ENCODE measurements at regions of chr2 and their contacts with region 1.

Region 1: GRCh38 chr2:96547751-96548161 is 11.2 kb downstream of the ARID5A start:
- DNase-seq: peak in 1 of 35 experiments; percentile 4
- ATAC-seq: no peak
- H3K4me3 ChIP-seq: no peak overlapping the region
- H3K4me3 Mint-ChIP-seq: peak overlapping the region in 2 of 3 donors; percentile 13 to 64
- H3K27ac ChIP-seq: no peak overlapping the region
- H3K27ac Mint-ChIP-seq: peak overlapping the region; percentile 66 to 87
- H3K4me1 ChIP-seq: peaks cover 20 to 50% of the 10 kb centered on the region in 2 experiments
- H3K4me1 Mint-ChIP-seq: peaks cover 50 to 55% (median 51%) of the 10 kb centered on the region in 3 donors
- H3K27me3 ChIP-seq: no peaks in the 10 kb centered on the region
- H3K27me3 Mint-ChIP-seq: no peaks in the 10 kb centered on the region

Region 2: DNA sequence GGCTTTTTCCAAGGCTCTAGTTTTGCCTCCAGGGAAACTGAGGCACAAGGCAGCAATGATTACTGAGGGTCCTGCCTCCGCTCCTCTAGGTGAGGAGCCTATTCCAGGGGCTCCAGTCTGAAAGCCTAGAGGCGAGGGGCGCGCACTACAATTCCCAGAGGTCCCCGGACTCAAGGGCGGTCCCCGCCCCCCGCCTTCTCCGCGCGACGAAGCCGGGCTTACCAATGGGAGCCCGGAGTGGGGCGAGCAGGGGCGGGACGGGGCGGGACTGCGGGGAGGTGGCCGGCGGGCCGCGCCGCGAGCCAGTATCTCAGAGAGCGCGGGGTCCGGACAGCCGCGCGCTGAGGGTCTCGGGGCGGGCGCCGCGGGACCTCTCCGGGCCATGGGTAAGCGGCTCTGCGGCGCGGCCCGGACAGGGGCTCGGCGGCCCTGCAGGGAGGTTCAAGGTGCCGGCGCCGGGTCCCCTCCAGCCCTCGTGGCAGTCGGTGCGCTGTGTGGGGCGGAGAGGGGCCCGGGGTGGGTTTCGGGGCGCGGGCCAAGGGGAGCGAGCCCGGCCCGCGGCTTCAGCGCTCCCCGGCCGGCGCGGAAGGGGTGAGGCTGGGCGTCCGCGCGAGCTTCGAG is 11.2 kb before region 1 on chr2 and contains the start of gene ARID5A:
- CTCF ChIA-PET with region 1: interaction called in 1 of 2 experiments, 48 read pairs
- POLR2A ChIA-PET with region 1: interaction called, 11 to 15 read pairs
- DNase-seq: peak; percentile 82 to 95 (median 92)
- ATAC-seq: peak; percentile 61 to 82 (median 72)
- H3K4me3 ChIP-seq: peak within 1 kb of the TSS; percentile 82 to 96
- H3K4me3 Mint-ChIP-seq: peak within 1 kb of the TSS; percentile 93 to 96 (median 94)
- H3K27ac ChIP-seq: peak within 1 kb of the TSS; percentile 97
- H3K27ac Mint-ChIP-seq: peak within 1 kb of the TSS; percentile 98 to 99
- H3K4me1 ChIP-seq: peaks cover 23 to 62% of the 10 kb centered on the region in 2 experiments
- H3K4me1 Mint-ChIP-seq: peaks cover 56 to 61% (median 57%) of the 10 kb centered on the region in 3 donors
- H3K27me3 ChIP-seq: no peaks in the 10 kb centered on the region
- H3K27me3 Mint-ChIP-seq: no peaks in the 10 kb centered on the region
- total RNA-seq, gene ARID5A: 105 to 140 (median 116) TPM

Region 3: DNA sequence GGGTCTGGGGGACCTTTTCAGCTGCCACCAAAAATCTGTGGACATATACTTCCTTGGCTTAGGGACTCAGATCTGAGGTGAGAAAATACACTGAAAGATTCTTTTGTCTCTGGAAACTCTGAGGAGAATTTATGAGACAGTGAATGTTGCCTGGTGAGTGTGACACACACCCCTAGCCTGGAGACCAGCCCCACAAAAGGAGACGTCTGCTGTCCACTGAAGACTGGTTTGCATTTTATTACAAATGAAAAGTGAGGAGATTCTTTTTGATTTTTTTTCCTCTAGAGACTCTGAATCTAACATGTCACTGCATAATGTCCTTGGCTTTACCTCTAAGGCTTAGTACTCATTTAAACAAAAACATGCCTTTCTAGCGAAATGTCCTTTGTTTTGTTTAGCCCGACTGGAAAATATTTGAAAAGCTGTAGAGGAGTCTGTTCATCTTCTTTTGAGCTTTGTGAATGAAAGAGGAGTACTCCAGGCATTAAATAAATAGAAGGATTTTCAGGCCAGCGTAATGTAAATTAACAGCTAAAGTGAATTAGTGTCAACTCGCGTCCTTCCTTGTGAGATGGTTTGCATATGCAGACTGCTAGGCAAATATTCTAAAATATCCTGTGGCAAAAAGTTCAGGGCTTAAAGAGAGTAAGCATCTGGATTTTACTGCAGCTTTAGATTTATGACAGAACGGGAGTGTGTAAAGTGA is 1664.5 kb after region 1 on chr2:
- CTCF ChIA-PET with region 1: no interaction called
- POLR2A ChIA-PET with region 1: no interaction called
- DNase-seq: no peak
- ATAC-seq: no peak
- H3K4me3 ChIP-seq: no peak overlapping the region
- H3K4me3 Mint-ChIP-seq: no peak overlapping the region
- H3K27ac ChIP-seq: no peak overlapping the region
- H3K27ac Mint-ChIP-seq: no peak overlapping the region
- H3K4me1 ChIP-seq: no peaks in the 10 kb centered on the region
- H3K4me1 Mint-ChIP-seq: no peaks in the 10 kb centered on the region
- H3K27me3 ChIP-seq: peaks cover 0 to 26% of the 10 kb centered on the region in 2 experiments
- H3K27me3 Mint-ChIP-seq: peaks cover 43 to 61% of the 10 kb centered on the region in 2 donors

Measured in T-cell (primary cell).